IMR-90 (cell line): ENCODE measurements at regions of chr18 and their contacts with region 1.

Region 1: GRCh38 chr18:25351777-25352628 is at the start of gene ZNF521:
- DNase-seq: peak; percentile 92
- ATAC-seq: peak; percentile 87
- H3K4me3 ChIP-seq: peak within 1 kb of the TSS; percentile 97
- H3K27ac ChIP-seq: peak within 1 kb of the TSS; percentile 99
- H3K4me1 ChIP-seq: 0 out of 2 replicates have a peak, but pooled peaks cover 2% of the 10 kb centered on the region
- H3K27me3 ChIP-seq: no peaks in the 10 kb centered on the region
- CTCF ChIP-seq: peak; percentile 49
- POLR2A ChIP-seq: peak; percentile 59; the same call in 1 of the 2 replicates
- RAD21 ChIP-seq: peak; percentile 53
- total RNA-seq, gene ZNF521: 44.7 and 59.3 TPM in 2 replicates

Region 2: GRCh38 chr18:24878289-24878688 is 473.7 kb before region 1 on chr18:
- CTCF ChIA-PET with region 1: no interaction called
- POLR2A ChIA-PET with region 1: no interaction called
- dilution Hi-C with region 1: no loop called
- in situ Hi-C with region 1: loop called (anchors 10 kb)
- intact Hi-C with region 1: loop called (anchors 2 kb)
- DNase-seq: peak; percentile 64
- ATAC-seq: peak; percentile 72
- H3K4me3 ChIP-seq: no peak overlapping the region
- H3K27ac ChIP-seq: no peak overlapping the region
- H3K4me1 ChIP-seq: peaks cover 8% of the 10 kb centered on the region
- H3K27me3 ChIP-seq: no peaks in the 10 kb centered on the region
- CTCF ChIP-seq: peak; percentile 71
- POLR2A ChIP-seq: no peak
- RAD21 ChIP-seq: peak; percentile 82

Region 3: GRCh38 chr18:25099895-25100294 is 252.1 kb before region 1 on chr18:
- CTCF ChIA-PET with region 1: no interaction called
- POLR2A ChIA-PET with region 1: no interaction called
- dilution Hi-C with region 1: no loop called
- in situ Hi-C with region 1: no loop called
- intact Hi-C with region 1: loop called (anchors 5 kb)
- DNase-seq: peak; percentile 40
- ATAC-seq: peak; percentile 53
- H3K4me3 ChIP-seq: no peak overlapping the region
- H3K27ac ChIP-seq: no peak overlapping the region
- H3K4me1 ChIP-seq: peaks cover 14% of the 10 kb centered on the region
- H3K27me3 ChIP-seq: no peaks in the 10 kb centered on the region
- CTCF ChIP-seq: peak; percentile 21; the same call in 1 of the 2 replicates
- POLR2A ChIP-seq: no peak
- RAD21 ChIP-seq: peak; percentile 38

Region 4: DNA sequence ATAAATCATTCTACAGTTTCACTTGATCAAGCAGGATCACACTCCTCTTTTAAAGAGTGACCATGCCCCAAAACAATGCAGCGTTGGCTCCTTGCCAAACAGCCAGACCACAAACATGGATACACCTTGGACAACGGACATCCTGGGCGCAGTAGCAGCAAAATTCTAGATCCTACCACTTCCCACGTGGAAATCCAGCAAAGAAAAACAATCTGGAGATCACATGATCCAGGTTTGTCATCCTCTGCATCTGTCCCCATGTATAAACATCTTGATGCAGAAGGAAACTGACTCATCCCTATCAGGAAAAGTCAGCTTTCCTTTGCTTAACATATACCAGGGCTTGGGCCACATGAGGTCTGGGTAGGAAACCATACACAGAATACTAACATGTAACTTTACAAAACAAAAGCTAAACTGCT is 53.1 kb before region 1 on chr18:
- CTCF ChIA-PET with region 1: no interaction called
- POLR2A ChIA-PET with region 1: interaction called, 14 read pairs
- dilution Hi-C with region 1: no loop called
- in situ Hi-C with region 1: no loop called
- intact Hi-C with region 1: loop called (anchors 2 kb)
- DNase-seq: peak; percentile 99
- ATAC-seq: peak; percentile 98
- H3K4me3 ChIP-seq: peak overlapping the region; percentile 27; the same call in 1 of the 2 replicates
- H3K27ac ChIP-seq: peak overlapping the region; percentile 72
- H3K4me1 ChIP-seq: peaks cover 6% of the 10 kb centered on the region
- H3K27me3 ChIP-seq: no peaks in the 10 kb centered on the region
- CTCF ChIP-seq: no peak
- POLR2A ChIP-seq: no peak; the same call in 1 of the 2 replicates
- RAD21 ChIP-seq: no peak; the same call in 1 of the 2 replicates

Region 5: DNA sequence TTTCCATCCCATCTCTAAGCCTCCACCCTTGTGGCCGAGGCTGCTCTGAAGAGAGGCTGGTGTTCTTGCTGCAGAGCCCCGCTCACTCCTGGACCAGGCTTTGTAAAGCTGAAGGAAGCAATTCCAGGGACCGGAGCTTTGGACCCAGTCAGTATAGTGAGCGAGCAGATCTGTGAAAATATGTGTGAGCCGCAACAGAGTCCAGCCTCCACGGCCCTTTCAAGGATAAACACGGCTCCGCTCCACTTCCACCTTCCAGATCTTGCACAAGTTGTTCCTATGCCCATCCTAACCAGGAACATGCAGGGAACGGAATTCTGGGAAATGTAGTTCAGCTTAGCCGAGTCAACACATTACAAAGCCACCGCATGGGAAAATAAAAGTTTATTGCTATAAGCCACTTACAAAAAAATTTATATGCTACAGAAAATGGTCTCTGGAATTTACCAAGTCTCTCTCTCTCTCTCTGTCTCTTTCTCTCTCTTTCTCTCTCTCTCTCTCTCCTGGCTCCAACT is 151.6 kb after region 1 on chr18:
- CTCF ChIA-PET with region 1: no interaction called
- POLR2A ChIA-PET with region 1: no interaction called
- dilution Hi-C with region 1: no loop called
- in situ Hi-C with region 1: no loop called
- intact Hi-C with region 1: loop called (anchors 1 kb)
- DNase-seq: peak; percentile 87
- ATAC-seq: peak; percentile 99
- H3K4me3 ChIP-seq: peak overlapping the region; percentile 42
- H3K27ac ChIP-seq: peak overlapping the region; percentile 72
- H3K4me1 ChIP-seq: no peaks in the 10 kb centered on the region
- H3K27me3 ChIP-seq: peaks cover 3% of the 10 kb centered on the region; the same call in 1 of the 2 replicates
- CTCF ChIP-seq: no peak
- POLR2A ChIP-seq: no peak
- RAD21 ChIP-seq: peak; percentile 17; the same call in 1 of the 2 replicates

Region 6: DNA sequence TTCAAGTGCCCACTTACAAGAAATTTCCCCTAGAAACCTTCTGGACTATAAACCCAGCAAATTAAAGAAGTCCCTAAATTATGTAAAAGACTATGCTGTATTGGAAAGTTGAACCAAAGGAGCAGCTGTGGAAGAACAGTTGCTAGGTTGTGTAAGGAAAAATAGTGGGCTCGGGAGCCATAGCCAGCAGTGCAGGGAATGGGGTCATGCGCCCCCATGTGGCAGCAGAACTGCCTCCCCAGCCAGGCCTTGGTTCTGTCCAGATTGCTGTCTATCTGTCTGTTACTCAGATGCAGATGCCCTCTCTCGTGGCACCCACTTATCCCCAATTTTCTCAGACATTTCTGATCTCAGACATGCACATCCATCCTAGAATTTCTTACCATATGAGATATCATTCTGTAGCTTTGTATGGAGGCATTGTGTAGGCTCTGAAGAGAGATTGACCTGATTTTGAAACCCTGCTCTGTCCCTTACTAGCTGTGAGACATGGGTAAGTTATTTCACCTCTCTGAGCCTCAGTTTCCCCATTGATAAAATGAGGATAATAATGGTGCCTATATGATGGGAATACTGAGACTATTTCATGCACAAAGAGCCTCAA is 480.1 kb after region 1 on chr18:
- CTCF ChIA-PET with region 1: no interaction called
- POLR2A ChIA-PET with region 1: no interaction called
- dilution Hi-C with region 1: no loop called
- in situ Hi-C with region 1: loop called (anchors 25 kb)
- intact Hi-C with region 1: loop called (anchors 1 kb)
- DNase-seq: peak; percentile 61
- ATAC-seq: peak; percentile 87
- H3K4me3 ChIP-seq: no peak overlapping the region
- H3K27ac ChIP-seq: no peak overlapping the region
- H3K4me1 ChIP-seq: peaks cover 9% of the 10 kb centered on the region
- H3K27me3 ChIP-seq: peaks cover 5% of the 10 kb centered on the region; the same call in 1 of the 2 replicates
- CTCF ChIP-seq: peak; percentile 84
- POLR2A ChIP-seq: no peak
- RAD21 ChIP-seq: peak; percentile 88